ENCODE measurements at regions of chr17 and their contacts with region 1.

Region 1: DNA sequence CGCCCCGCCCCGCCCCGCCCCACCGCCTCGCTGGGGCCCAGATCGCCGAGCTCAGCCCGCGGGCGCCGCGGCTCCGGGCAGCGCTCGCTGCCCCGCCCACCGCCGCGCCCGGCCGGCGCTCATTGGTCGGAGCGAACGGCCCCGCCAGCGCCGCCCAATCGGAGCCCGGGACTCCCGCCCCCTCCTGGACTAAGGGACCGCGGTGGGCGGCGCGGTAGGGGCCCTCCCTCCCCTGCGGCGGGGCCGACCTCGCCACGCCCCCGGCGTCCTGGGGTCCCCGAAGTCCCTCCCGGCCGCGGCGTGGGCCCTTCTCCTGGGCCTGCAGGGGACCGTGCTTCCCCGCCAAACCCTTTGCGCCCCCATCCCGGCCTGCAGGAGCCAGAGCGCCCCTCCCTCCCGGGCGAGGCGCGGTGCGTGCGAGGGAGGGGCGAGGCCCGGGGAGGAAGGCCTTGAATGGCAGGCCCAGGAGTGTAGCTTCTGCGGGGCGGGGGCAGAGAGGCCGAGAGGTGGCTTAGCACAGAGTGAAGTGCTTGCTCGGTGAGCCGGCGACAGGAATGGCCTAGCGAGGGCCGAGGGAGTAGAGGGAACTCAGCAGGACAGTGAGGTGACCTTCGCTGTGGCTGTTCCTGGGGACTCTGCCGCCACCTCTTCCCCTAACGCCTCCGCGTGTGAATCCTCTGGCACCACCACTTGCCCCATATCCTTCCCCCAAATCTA is at the start of gene CAMKK1:
- DNase-seq: peak; percentile 70 to 93 (median 88)
- ATAC-seq: peak; percentile 69
- H3K4me3 ChIP-seq: peak within 1 kb of the TSS; percentile 48 to 79
- H3K4me3 Mint-ChIP-seq: peak within 1 kb of the TSS; percentile 86
- H3K27ac ChIP-seq: peak within 1 kb of the TSS; percentile 33 to 35
- H3K27ac Mint-ChIP-seq: peak within 1 kb of the TSS; percentile 88
- H3K4me1 ChIP-seq: peaks cover 18% of the 10 kb centered on the region
- H3K4me1 Mint-ChIP-seq: peaks cover 20% of the 10 kb centered on the region
- H3K27me3 ChIP-seq: no peaks in the 10 kb centered on the region
- H3K27me3 Mint-ChIP-seq: no peaks in the 10 kb centered on the region
- CTCF ChIP-seq: no peak
- total RNA-seq, gene CAMKK1: 5.3 to 5.9 TPM

Region 2: DNA sequence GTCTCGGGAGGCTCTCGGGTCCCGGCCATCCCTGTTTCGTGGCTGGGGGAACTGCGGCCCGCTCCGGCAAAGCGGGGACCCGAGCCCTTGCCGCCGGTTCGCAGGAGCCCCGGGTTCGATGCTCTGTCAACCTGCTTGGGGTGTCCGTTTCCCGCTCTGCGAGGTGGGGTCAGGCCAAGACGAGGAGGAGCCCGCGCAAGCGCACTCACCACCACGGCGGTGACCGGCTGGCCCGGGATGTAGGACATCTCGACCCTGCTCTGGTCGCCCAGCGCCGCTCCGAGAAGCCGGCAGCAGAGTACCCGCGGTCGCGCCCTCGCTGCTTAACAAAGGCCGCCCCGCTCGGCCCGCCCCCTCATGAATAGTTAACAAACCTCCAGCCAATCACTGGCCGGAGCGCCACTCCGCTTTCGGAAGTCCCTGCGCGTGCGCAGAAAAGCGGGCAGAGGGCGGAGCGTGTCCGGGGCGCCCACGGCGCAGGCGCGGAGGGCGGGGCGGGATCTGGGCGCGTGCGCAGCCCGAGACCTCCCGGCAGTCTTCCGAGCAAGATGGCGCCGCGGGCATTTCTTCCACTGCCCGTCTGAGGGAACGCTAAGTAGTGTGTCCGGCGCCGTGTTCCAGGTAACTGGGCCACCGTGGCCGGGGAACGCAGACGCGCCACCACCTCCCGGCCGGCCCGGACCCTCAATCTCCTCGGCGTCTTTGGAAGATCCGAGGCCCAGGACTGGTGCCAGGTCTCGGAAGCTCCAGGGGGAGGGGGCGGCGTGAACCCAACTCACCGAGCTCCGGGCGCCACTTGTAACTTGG is 224.7 kb before region 1 on chr17 and contains the starts of genes EMC6 and TAX1BP3:
- CTCF ChIA-PET with region 1: no interaction called
- POLR2A ChIA-PET with region 1: no interaction called
- intact Hi-C with region 1: loop called in 1 of 2 experiments (anchors 2 kb)
- DNase-seq: peak; percentile 97 to 100 (median 98)
- ATAC-seq: peak; percentile 92
- H3K4me3 ChIP-seq: peak within 1 kb of the TSS; percentile 73 to 100
- H3K4me3 Mint-ChIP-seq: peak within 1 kb of the TSS; percentile 90
- H3K27ac ChIP-seq: peak within 1 kb of the TSS; percentile 58 to 86
- H3K27ac Mint-ChIP-seq: peak within 1 kb of the TSS; percentile 81
- H3K4me1 ChIP-seq: peaks cover 21% of the 10 kb centered on the region
- H3K4me1 Mint-ChIP-seq: peaks cover 22% of the 10 kb centered on the region
- H3K27me3 ChIP-seq: no peaks in the 10 kb centered on the region
- H3K27me3 Mint-ChIP-seq: no peaks in the 10 kb centered on the region
- CTCF ChIP-seq: no peak
- total RNA-seq, gene EMC6: 39.4 to 41.6 TPM
- total RNA-seq, gene TAX1BP3: 5.5 to 5.8 TPM

Region 3: DNA sequence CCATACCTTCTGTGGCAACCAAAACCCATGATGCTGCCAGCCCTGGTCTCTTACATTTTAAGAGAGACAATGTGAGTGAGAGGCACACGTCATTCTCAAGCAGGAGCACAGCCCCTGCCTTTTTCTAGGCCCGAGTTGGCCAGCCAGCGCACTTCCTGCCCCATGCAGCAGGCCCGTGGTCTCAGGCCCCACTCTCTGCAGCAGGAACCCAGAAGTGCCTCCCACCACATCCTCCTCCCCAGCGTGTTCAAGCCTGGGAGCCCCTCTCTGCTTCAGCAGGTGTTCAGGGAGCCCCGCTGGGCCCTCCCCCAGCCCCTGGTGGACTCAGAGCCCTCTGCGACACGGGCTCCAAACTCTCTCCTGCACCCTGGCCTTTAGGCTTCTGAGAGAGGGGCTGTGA is 122.7 kb before region 1 on chr17:
- CTCF ChIA-PET with region 1: no interaction called
- POLR2A ChIA-PET with region 1: no interaction called
- intact Hi-C with region 1: loop called in 1 of 2 experiments (anchors 1 kb)
- DNase-seq: peak; percentile 30 to 88 (median 73)
- ATAC-seq: peak; percentile 73
- H3K4me3 ChIP-seq: no peak overlapping the region
- H3K4me3 Mint-ChIP-seq: peak overlapping the region; percentile 68
- H3K27ac ChIP-seq: peak overlapping the region; percentile 57 to 61
- H3K27ac Mint-ChIP-seq: peak overlapping the region; percentile 95
- H3K4me1 ChIP-seq: peaks cover 66% of the 10 kb centered on the region
- H3K4me1 Mint-ChIP-seq: peaks cover 64% of the 10 kb centered on the region
- H3K27me3 ChIP-seq: no peaks in the 10 kb centered on the region
- H3K27me3 Mint-ChIP-seq: no peaks in the 10 kb centered on the region
- CTCF ChIP-seq: no peak

Region 4: DNA sequence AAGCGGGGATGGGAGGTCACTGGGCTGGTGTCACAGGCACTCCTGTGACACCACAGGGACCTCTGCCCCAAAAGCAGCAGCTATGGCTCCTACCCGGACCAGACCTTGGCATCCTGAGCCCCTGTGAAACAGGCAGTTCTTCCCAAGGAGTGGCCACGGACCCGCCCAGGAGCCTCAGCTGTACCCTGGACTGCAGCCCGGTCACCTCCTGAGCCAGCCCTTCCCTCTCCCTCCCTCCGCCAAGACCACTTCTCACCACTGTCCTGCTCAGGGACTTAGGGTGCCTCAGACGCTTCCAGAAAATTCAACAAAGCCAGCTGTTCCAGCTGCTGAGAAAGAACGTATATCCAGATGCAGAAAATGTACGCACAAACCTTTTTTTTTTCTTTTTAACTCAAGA is 33.2 kb before region 1 on chr17:
- CTCF ChIA-PET with region 1: interaction called, 5 read pairs
- POLR2A ChIA-PET with region 1: no interaction called
- intact Hi-C with region 1: loop called in 1 of 2 experiments (anchors 2 kb)
- DNase-seq: no peak
- ATAC-seq: no peak
- H3K4me3 ChIP-seq: no peak overlapping the region
- H3K4me3 Mint-ChIP-seq: no peak overlapping the region
- H3K27ac ChIP-seq: no peak overlapping the region
- H3K27ac Mint-ChIP-seq: no peak overlapping the region
- H3K4me1 ChIP-seq: no peaks in the 10 kb centered on the region
- H3K4me1 Mint-ChIP-seq: no peaks in the 10 kb centered on the region
- H3K27me3 ChIP-seq: no peaks in the 10 kb centered on the region
- H3K27me3 Mint-ChIP-seq: no peaks in the 10 kb centered on the region
- CTCF ChIP-seq: no peak

Region 5: GRCh38 chr17:3965118-3965803 is 72.1 kb after region 1 on chr17:
- CTCF ChIA-PET with region 1: no interaction called
- POLR2A ChIA-PET with region 1: interaction called, 3 read pairs
- intact Hi-C with region 1: loop called (anchors 1 kb)
- DNase-seq: peak; percentile 33 to 81 (median 73)
- ATAC-seq: peak; percentile 51
- H3K4me3 ChIP-seq: peak overlapping the region; percentile 71 to 83
- H3K4me3 Mint-ChIP-seq: peak overlapping the region; percentile 91
- H3K27ac ChIP-seq: peak overlapping the region; percentile 76 to 77
- H3K27ac Mint-ChIP-seq: peak overlapping the region; percentile 94
- H3K4me1 ChIP-seq: peaks cover 39% of the 10 kb centered on the region
- H3K4me1 Mint-ChIP-seq: peaks cover 40% of the 10 kb centered on the region
- H3K27me3 ChIP-seq: no peaks in the 10 kb centered on the region
- H3K27me3 Mint-ChIP-seq: no peaks in the 10 kb centered on the region
- CTCF ChIP-seq: no peak

Region 6: DNA sequence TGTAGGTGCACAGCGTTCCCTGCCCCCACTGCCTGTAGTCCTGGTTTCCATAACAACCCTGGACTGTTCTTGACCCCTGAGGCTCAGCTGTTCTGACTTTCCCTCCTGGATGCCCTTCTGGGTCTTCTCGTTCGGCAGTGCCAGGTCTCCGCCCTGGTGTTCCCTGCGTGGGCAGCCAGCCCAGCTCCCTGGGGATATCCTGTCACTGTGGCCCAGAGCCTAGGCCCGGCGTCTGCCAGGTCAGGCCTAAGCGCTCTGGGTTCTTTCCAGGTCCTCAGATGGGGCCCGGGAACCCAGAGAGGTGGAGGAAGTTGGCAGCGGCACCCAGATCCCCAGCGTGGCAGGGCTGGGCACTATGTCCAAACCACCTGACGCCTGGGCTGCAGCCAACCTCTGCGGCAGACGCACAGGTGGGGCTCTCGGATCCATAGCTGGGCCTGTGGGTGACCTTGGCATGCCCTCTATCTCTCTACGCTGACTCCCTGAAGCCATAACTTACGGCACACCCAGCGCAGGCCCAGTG is 83.5 kb after region 1 on chr17:
- CTCF ChIA-PET with region 1: no interaction called
- POLR2A ChIA-PET with region 1: no interaction called
- intact Hi-C with region 1: no loop called
- DNase-seq: no peak
- ATAC-seq: no peak
- H3K4me3 ChIP-seq: no peak overlapping the region
- H3K4me3 Mint-ChIP-seq: no peak overlapping the region
- H3K27ac ChIP-seq: no peak overlapping the region
- H3K27ac Mint-ChIP-seq: no peak overlapping the region
- H3K4me1 ChIP-seq: peaks cover 15% of the 10 kb centered on the region
- H3K4me1 Mint-ChIP-seq: peaks cover 19% of the 10 kb centered on the region
- H3K27me3 ChIP-seq: no peaks in the 10 kb centered on the region
- H3K27me3 Mint-ChIP-seq: no peaks in the 10 kb centered on the region
- CTCF ChIP-seq: no peak

Region 7: GRCh38 chr17:4263282-4264215 is 370.4 kb after region 1 on chr17 and contains the start of gene ANKFY1:
- CTCF ChIA-PET with region 1: no interaction called
- POLR2A ChIA-PET with region 1: no interaction called
- intact Hi-C with region 1: loop called in 1 of 2 experiments (anchors 5 kb)
- DNase-seq: peak; percentile 95 to 98 (median 97)
- ATAC-seq: peak; percentile 95
- H3K4me3 ChIP-seq: peak within 1 kb of the TSS; percentile 86 to 99
- H3K4me3 Mint-ChIP-seq: peak within 1 kb of the TSS; percentile 90
- H3K27ac ChIP-seq: peak within 1 kb of the TSS; percentile 81 to 88
- H3K27ac Mint-ChIP-seq: peak within 1 kb of the TSS; percentile 91
- H3K4me1 ChIP-seq: peaks cover 21% of the 10 kb centered on the region
- H3K4me1 Mint-ChIP-seq: peaks cover 40% of the 10 kb centered on the region
- H3K27me3 ChIP-seq: no peaks in the 10 kb centered on the region
- H3K27me3 Mint-ChIP-seq: no peaks in the 10 kb centered on the region
- CTCF ChIP-seq: no peak
- total RNA-seq, gene ANKFY1: 26.2 to 28.6 TPM

Measured in CD8-positive, alpha-beta T cell (primary cell).